Aorta (tissue), 5 donors: ENCODE measurements at regions of chr16 and their contacts with region 1.

Region 1: GRCh38 chr16:4402439-4403132 is 13.8 kb downstream of the CORO7 start:
- DNase-seq: peak; percentile 88 to 96
- ATAC-seq: peak; percentile 96
- H3K4me3 ChIP-seq: no peak overlapping the region
- H3K27ac ChIP-seq: no peak overlapping the region
- H3K4me1 ChIP-seq: no peaks in the 10 kb centered on the region
- H3K27me3 ChIP-seq: no peaks in the 10 kb centered on the region

Region 2: DNA sequence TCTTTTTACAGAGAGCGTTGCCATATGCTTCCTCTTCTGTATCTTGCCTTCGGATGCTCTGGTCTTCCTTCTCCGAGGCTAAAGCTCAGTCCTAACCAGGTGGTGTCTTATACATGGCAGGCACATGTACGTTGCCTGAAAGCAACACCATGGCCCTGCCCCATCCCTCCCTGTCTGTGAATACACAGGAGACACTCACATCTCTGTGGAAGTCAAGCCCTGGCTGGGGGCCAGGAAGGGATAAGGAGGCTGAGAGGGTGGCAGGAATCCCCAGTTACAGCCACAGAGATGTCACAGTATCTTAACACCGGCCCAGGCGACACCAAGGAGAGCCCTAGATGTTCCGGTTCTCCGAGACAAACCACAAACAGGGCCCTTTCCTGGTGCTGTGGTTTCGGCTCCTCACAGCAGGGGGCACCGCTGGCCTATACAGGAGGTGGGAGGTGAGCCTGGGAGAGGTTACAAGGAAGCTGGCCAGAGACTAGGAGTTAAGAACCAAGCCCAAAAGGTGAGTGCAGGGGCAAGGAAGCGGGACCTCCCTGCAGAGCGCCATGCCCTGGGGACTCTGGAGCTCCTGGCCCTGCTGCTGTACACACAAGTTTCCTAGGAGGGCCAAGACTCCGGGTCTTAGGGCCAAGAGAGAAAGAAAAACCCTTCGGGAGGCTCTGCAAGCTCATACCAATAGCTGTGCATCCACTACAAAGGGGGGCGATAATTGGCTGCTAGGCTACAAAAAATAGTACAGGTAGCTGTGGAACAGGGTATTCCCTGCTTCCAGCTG is 202.4 kb before region 1 on chr16:
- intact Hi-C with region 1: loop called in 1 of 2 experiments (anchors 10 kb)
- DNase-seq: peak; percentile 75 to 92
- ATAC-seq: peak; percentile 80
- H3K4me3 ChIP-seq: no peak overlapping the region
- H3K27ac ChIP-seq: no peak overlapping the region
- H3K4me1 ChIP-seq: no peaks in the 10 kb centered on the region
- H3K27me3 ChIP-seq: no peaks in the 10 kb centered on the region

Region 3: GRCh38 chr16:4271176-4272066 is 131.2 kb before region 1 on chr16:
- intact Hi-C with region 1: loop called in 1 of 2 experiments (anchors 5 kb)
- DNase-seq: peak; percentile 96 to 98
- ATAC-seq: peak; percentile 91
- H3K4me3 ChIP-seq: peak overlapping the region; percentile 66 to 79
- H3K27ac ChIP-seq: peak overlapping the region in 1 of 2 donors; percentile 4
- H3K4me1 ChIP-seq: no peaks in the 10 kb centered on the region
- H3K27me3 ChIP-seq: no peaks in the 10 kb centered on the region

Region 4: DNA sequence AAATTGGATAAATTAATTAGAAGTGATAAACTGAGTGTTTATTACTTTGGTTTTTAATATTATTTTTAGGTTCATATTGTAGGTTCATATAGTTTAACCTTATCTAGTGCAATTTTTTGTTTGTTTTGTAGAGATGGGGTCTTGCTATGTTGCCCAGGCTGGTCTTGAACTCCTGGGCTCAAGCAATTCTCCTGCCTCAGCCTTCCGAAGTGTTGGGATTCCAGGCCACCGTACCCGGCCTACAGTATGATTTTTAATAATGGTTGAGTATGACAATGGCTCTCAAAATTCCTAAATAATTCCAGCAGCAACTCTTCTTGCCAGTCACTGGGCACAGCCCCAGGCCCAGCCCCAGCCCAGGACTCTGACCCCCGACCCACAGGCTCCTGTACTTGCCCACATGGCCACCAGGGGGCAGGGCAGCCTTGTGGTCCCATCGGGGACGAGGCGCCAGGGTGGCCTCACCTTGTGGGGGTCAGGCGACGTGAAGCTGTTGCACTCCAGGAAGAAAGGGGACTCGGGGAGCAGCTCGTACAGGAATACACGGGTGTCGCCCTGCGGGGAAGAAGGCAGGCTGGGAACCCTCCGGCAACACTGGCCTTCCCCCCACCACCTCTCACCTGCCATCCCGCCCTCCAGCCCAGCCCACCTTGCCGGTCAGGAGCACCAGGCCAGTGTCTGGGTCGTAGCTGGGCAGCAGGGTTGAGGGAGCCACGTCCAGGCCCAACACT is 43.6 kb before region 1 on chr16:
- intact Hi-C with region 1: loop called (anchors 1 kb)
- DNase-seq: peak in 1 of 2 donors; percentile 91
- ATAC-seq: peak; percentile 85
- H3K4me3 ChIP-seq: no peak overlapping the region
- H3K27ac ChIP-seq: no peak overlapping the region
- H3K4me1 ChIP-seq: no peaks in the 10 kb centered on the region
- H3K27me3 ChIP-seq: no peaks in the 10 kb centered on the region

Region 5: DNA sequence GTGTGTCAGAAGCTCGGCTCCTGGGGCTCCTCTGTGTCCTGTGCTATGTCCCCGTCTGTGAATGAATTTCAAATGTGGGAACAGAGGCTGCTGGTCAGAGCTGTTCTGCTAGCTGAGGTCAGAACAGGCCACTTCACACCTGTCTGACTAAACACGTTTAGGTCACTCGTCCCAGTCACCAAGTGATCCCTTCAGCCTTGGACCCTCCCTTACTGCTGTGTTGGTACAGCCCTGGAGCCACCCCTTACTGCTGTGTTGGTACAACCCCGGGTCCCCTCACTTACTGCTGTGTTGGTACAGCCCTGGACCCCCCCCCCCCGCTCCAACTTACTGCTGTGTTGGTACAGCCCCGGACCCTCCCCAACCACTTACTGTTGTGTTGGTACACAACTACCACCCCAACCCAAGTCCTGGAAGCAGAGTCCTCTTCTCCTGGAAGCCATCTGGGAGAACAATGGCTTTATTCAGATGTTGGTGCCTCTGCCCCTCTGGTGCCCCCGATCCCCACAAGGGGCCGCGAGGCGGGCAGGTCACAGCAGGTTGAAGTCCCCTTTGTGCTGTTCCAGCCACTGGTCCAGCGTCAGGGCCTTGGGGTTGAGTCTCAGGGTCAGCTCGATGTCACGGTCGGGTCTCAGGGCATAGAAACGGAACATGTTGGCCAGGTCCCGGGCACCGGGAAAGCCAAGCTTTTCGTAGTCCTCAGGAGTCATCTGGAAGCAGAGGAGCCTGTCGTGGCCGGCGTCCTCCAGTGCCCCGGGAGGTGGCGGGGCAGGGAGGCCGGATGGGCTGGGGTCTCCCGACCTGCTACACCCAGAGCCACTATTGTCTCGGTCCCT is 58.9 kb after region 1 on chr16:
- intact Hi-C with region 1: no loop called
- DNase-seq: no peak
- ATAC-seq: no peak
- H3K4me3 ChIP-seq: no peak overlapping the region
- H3K27ac ChIP-seq: no peak overlapping the region
- H3K4me1 ChIP-seq: no peaks in the 10 kb centered on the region
- H3K27me3 ChIP-seq: no peaks in the 10 kb centered on the region

Region 6: GRCh38 chr16:4475880-4476788 is 73.5 kb after region 1 on chr16 and contains the start of gene HMOX2:
- intact Hi-C with region 1: no loop called
- DNase-seq: peak; percentile 94 to 96
- ATAC-seq: peak; percentile 96
- H3K4me3 ChIP-seq: peak within 1 kb of the TSS; percentile 56 to 69
- H3K27ac ChIP-seq: no peak within 1 kb of the TSS
- H3K4me1 ChIP-seq: no peaks in the 10 kb centered on the region
- H3K27me3 ChIP-seq: no peaks in the 10 kb centered on the region
- total RNA-seq, gene HMOX2: 25.1 to 28.6 TPM